WTC11 (cell line): ENCODE measurements at regions of chr20 and their contacts with region 1.

Region 1: DNA sequence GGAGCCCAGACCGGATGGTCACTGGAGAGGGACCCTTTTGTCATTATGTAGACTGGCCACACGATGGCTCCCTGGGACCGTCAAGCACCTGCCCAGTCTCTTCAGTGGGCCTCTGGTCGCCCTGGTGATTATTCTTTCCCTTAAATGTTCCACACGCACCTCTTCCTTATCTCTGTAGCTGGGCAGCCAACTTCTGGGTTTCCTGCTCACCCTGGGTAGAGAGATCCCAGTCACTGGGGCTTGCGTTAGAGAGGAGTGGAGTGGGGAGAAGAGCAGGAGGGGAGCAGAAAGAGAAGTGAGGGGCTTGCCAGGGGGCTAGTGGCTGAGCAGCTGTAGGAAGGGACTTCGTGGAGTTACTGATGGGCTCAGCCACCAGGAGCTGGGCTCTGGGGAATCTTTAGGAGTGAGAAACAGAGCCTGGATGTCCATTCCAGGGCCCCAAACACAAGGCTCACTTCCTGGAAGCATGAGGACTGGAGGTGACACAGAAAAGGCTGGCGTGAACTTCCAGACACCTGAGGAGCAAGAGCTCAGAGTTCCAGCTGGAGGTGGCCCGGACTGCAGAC is 150.1 kb downstream of the DHX35 start:
- DNase-seq: peak; percentile 69
- ATAC-seq: peak; percentile 87
- H3K4me3 Mint-ChIP-seq: peak overlapping the region; percentile 49
- H3K27ac Mint-ChIP-seq: no peak overlapping the region
- H3K4me1 Mint-ChIP-seq: peaks cover 52% of the 10 kb centered on the region
- H3K27me3 Mint-ChIP-seq: no peaks in the 10 kb centered on the region; the same call in 1 of the 2 replicates
- CTCF ChIP-seq: peak; percentile 68

Region 2: DNA sequence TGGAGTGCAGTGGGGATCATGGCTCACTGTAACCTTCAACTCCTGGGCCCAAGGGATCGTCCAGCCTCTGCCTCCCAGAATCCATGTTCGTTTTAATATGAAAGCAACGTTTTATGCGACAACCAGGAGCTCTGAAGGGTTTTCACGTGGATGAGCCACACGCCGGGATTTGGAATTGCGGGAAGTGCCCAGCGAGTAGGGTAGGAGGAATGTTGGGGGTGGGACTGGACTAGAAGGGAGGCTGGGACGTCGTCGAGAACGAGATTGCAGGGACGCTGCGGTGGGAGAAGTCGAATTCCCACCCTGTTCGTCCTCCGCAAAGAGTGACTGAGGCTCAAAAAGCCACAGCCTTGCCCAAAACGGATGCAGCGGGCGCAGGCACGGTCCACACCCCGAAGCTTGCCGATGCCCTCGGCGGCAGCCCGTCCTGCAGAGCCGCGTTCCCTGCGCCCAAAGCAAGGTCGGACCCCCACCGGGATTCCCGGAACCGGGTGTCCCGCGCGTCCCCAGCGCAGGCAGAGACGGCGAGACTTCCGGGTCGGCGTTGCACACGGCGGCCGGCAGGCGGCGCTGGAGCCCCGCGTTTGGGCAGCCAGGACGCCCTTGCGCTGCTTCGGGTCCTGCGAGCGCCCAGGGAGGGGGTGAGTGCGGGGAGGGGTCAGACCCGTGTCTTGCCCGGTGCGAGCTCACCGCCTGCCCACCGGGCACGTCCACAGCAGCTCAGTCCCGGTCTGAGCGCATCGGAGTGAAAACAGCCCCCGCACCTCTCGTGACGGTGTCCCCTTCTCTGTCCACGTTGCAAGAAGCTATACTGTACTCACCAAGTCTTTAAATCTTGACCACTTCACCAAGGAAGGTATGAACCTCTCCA is 62.3 kb before region 1 on chr20:
- CTCF ChIA-PET with region 1: interaction called, 50 read pairs
- POLR2A ChIA-PET with region 1: no interaction called
- DNase-seq: peak; percentile 88
- ATAC-seq: peak; percentile 81
- H3K4me3 Mint-ChIP-seq: peak overlapping the region; percentile 78
- H3K27ac Mint-ChIP-seq: no peak overlapping the region
- H3K4me1 Mint-ChIP-seq: peaks cover 4% of the 10 kb centered on the region; the same call in 1 of the 2 replicates
- H3K27me3 Mint-ChIP-seq: peaks cover 18% of the 10 kb centered on the region
- CTCF ChIP-seq: peak; percentile 98

Region 3: GRCh38 chr20:39245685-39246311 is 133.5 kb after region 1 on chr20:
- CTCF ChIA-PET with region 1: interaction called, 11 read pairs
- POLR2A ChIA-PET with region 1: no interaction called
- DNase-seq: no peak
- ATAC-seq: no peak
- H3K4me3 Mint-ChIP-seq: no peak overlapping the region
- H3K27ac Mint-ChIP-seq: no peak overlapping the region
- H3K4me1 Mint-ChIP-seq: no peaks in the 10 kb centered on the region
- H3K27me3 Mint-ChIP-seq: peaks cover 4% of the 10 kb centered on the region
- CTCF ChIP-seq: no peak

Region 4: GRCh38 chr20:39398656-39399055 is 286.4 kb after region 1 on chr20:
- CTCF ChIA-PET with region 1: interaction called, 12 read pairs
- POLR2A ChIA-PET with region 1: no interaction called
- DNase-seq: peak; percentile 13
- ATAC-seq: peak; percentile 84
- H3K4me3 Mint-ChIP-seq: no peak overlapping the region
- H3K27ac Mint-ChIP-seq: no peak overlapping the region
- H3K4me1 Mint-ChIP-seq: no peaks in the 10 kb centered on the region
- H3K27me3 Mint-ChIP-seq: peaks cover 2% of the 10 kb centered on the region
- CTCF ChIP-seq: no peak

Region 5: DNA sequence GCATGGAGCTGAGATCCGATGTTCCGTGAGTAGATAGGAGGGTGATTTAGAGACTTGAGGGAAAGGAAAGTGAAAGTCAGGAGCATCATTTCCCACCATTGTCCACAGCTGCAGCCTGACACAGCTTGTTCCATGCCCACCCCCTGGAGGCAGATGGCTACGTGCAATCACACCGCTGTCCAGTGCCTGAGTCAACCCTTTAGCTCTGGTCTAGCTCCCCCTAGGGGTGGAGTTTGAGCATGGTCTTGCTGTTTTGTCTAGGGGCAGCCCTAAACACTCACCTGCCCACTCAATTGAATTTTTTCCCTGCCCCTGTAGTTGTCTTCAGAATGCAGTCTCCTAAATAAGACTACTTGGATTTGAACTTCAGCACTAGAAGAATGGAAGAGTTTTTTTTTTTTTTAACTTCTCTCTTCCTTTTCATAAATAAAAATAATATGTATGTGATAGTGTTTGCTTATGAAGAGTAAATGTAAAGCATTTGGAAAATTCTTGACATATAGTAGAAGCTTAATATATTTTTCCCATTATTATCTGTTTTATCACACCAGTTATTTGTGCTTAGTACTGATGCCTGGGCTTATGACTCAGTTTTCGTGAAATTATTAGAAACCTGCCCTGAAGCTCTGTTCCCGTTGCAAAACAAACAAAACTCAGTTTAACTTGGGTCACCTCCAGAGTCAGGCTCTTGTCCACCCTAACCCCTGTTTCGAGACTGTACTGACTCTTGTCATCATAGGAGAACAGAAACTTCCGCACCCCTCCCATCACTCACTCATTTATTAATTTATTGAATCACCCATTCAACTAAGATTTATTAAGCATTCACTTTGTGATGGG is 762.0 kb after region 1 on chr20:
- CTCF ChIA-PET with region 1: interaction called, 12 read pairs
- POLR2A ChIA-PET with region 1: no interaction called
- DNase-seq: peak; percentile 87
- ATAC-seq: peak; percentile 97
- H3K4me3 Mint-ChIP-seq: no peak overlapping the region
- H3K27ac Mint-ChIP-seq: no peak overlapping the region
- H3K4me1 Mint-ChIP-seq: peaks cover 28% of the 10 kb centered on the region
- H3K27me3 Mint-ChIP-seq: no peaks in the 10 kb centered on the region
- CTCF ChIP-seq: peak; percentile 93